Activated B cell treated with CpG ODN at 0.5 μM for 24 hours (primary cell): ENCODE measurements at regions of chr1 and their contacts with region 1.

Region 1: GRCh38 chr1:163410073-163410999 is 88.6 kb downstream of the NUF2 start:
- DNase-seq: no peak
- ATAC-seq: no peak
- H3K4me3 Mint-ChIP-seq: no peak overlapping the region
- H3K27ac Mint-ChIP-seq: no peak overlapping the region
- H3K4me1 Mint-ChIP-seq: peaks cover 18% of the 10 kb centered on the region
- H3K27me3 Mint-ChIP-seq: peaks cover 5% of the 10 kb centered on the region
- CTCF ChIP-seq: no peak

Region 2: DNA sequence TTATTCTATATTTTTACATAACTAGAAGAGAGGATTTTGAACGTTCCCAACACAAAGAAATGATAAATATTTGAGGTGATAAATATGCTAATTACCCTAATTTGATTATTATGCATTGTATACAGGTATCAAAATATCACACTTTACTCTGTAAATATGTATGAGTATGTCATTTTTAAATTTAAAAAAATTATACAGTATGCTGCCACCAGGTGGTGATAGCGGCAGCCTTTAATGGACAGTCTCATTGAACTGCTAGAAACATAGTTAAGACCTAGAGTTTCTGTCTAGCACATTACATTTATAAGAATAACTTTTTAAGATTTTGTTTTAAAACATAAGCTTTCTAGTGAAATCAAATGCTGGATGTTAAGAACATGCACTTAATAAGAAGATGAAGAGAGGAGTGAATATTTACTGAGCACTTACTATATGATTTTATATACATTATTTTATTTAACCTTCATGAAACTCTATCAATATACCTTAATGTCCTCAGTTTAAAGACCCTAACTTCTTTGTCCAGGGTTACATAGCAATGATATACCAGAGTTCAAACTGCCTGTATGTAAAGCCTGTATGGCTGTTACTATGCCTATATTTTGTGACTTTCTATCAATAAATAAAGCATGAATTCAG is 118.5 kb after region 1 on chr1:
- CTCF ChIA-PET with region 1: no interaction called
- POLR2A ChIA-PET with region 1: no interaction called
- intact Hi-C with region 1: loop called (anchors 1 kb)
- DNase-seq: no peak
- ATAC-seq: no peak
- H3K4me3 Mint-ChIP-seq: no peak overlapping the region
- H3K27ac Mint-ChIP-seq: no peak overlapping the region
- H3K4me1 Mint-ChIP-seq: no peaks in the 10 kb centered on the region
- H3K27me3 Mint-ChIP-seq: peaks cover 2% of the 10 kb centered on the region
- CTCF ChIP-seq: no peak

Region 3: GRCh38 chr1:164786980-164787833 is 1376.9 kb after region 1 on chr1:
- CTCF ChIA-PET with region 1: interaction called, 16 read pairs
- POLR2A ChIA-PET with region 1: no interaction called
- intact Hi-C with region 1: no loop called
- DNase-seq: peak; percentile 29
- ATAC-seq: peak; percentile 34
- H3K4me3 Mint-ChIP-seq: no peak overlapping the region
- H3K27ac Mint-ChIP-seq: no peak overlapping the region
- H3K4me1 Mint-ChIP-seq: no peaks in the 10 kb centered on the region
- H3K27me3 Mint-ChIP-seq: peaks cover 10% of the 10 kb centered on the region
- CTCF ChIP-seq: no peak

Region 4: GRCh38 chr1:165073185-165074007 is 1663.1 kb after region 1 on chr1:
- CTCF ChIA-PET with region 1: no interaction called
- POLR2A ChIA-PET with region 1: no interaction called
- intact Hi-C with region 1: loop called (anchors 5 kb)
- DNase-seq: no peak
- ATAC-seq: no peak
- H3K4me3 Mint-ChIP-seq: no peak overlapping the region
- H3K27ac Mint-ChIP-seq: no peak overlapping the region
- H3K4me1 Mint-ChIP-seq: no peaks in the 10 kb centered on the region
- H3K27me3 Mint-ChIP-seq: no peaks in the 10 kb centered on the region
- CTCF ChIP-seq: no peak

Region 5: DNA sequence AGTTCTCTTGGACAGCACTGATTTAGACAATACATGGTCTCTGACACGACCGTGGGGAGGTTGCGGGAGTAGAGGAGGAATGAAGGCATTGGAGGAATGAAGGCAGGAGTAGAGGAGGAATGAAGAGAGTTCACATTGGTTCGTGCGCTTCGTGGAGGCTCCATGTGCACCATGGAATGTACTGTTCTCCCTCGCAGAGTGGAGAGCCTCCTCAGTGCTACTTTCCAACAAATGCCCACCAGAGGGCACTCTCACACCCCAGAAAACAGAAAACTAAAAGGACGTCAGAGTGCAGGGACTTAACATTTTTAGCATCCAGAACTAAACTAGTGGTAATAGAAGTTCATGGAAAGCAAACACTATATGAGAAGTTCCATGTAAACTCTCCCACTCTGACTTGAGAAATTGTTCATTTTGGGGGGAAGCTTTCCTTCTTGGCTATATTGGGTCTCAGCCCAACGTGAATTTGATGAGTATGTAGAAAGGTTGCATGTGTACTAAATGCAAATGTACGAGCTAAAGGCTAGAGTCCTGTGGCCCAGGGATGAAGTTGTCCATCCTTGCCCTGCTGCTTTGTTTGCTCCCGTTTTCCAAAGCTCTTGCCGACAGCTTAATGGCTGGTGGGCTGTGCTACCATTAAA is 1734.5 kb after region 1 on chr1:
- CTCF ChIA-PET with region 1: no interaction called
- POLR2A ChIA-PET with region 1: no interaction called
- intact Hi-C with region 1: loop called (anchors 10 kb)
- DNase-seq: no peak
- ATAC-seq: no peak
- H3K4me3 Mint-ChIP-seq: no peak overlapping the region
- H3K27ac Mint-ChIP-seq: no peak overlapping the region
- H3K4me1 Mint-ChIP-seq: no peaks in the 10 kb centered on the region
- H3K27me3 Mint-ChIP-seq: peaks cover 6% of the 10 kb centered on the region
- CTCF ChIP-seq: no peak